ENCODE measurements at regions of chr11 and their contacts with region 1.

Region 1: GRCh38 chr11:95912902-95913560 is 10.9 kb downstream of the MTMR2 start:
- DNase-seq: no peak
- ATAC-seq: no peak
- H3K4me3 ChIP-seq: no peak overlapping the region
- H3K27ac ChIP-seq: no peak overlapping the region
- H3K4me1 ChIP-seq: no peaks in the 10 kb centered on the region
- H3K27me3 ChIP-seq: no peaks in the 10 kb centered on the region
- CTCF ChIP-seq: no peak
- EP300 ChIP-seq: no peak
- POLR2A ChIP-seq: no peak
- RAD21 ChIP-seq: no peak

Region 2: GRCh38 chr11:95531116-95531515 is 381.9 kb before region 1 on chr11:
- CTCF ChIA-PET with region 1: no interaction called
- POLR2A ChIA-PET with region 1: no interaction called
- in situ Hi-C with region 1: no loop called
- intact Hi-C with region 1: no loop called
- DNase-seq: no peak
- ATAC-seq: no peak
- H3K4me3 ChIP-seq: no peak overlapping the region
- H3K27ac ChIP-seq: no peak overlapping the region
- H3K4me1 ChIP-seq: no peaks in the 10 kb centered on the region
- H3K27me3 ChIP-seq: no peaks in the 10 kb centered on the region; a peak in 1 of 5 replicates
- CTCF ChIP-seq: no peak
- EP300 ChIP-seq: no peak
- POLR2A ChIP-seq: no peak
- RAD21 ChIP-seq: no peak

Region 3: DNA sequence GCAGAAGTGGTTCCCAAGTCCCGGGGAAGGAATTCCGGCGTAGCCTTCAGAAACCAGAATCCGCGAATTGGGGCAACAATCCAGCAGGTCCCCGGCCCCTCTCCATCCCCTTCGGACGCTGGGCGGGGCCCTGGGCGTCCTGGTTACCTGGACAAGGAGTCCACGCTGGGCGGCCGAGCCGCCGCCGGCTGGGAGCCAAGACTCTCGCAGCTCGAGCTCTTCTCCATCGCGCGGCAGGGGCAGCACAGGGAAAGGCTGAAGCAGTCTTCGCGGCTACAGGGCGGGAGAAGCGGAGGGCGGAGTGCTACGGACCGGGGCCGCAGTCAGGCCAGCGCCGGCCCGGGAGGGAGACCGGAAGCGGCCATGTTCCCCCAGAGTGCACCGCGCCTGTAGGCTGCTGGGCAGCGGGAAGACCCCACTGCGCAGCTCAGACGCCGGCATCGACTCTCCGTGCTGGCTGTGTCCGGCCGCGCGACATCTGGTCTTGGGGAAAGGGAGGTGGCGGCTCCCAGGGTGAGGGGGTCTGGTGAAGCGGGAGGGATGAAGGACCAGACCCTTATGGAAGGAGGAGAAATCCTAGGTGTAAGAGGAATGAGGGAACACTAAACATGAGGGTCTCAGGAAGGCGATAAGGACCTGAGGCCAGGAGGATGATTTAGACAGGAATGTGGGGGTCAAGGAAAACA is 10.8 kb after region 1 on chr11 and contains the start of gene MTMR2:
- CTCF ChIA-PET with region 1: no interaction called
- POLR2A ChIA-PET with region 1: interaction called, 13 read pairs
- in situ Hi-C with region 1: no loop called
- intact Hi-C with region 1: no loop called
- DNase-seq: peak; percentile 77 to 84 (median 81)
- ATAC-seq: peak; percentile 99
- H3K4me3 ChIP-seq: peak within 1 kb of the TSS; percentile 75
- H3K27ac ChIP-seq: peak within 1 kb of the TSS; percentile 84
- H3K4me1 ChIP-seq: peaks cover 6 to 10% of the 10 kb centered on the region in 2 experiments; a peak in 4 of 5 replicates
- H3K27me3 ChIP-seq: no peaks in the 10 kb centered on the region
- CTCF ChIP-seq: 0 out of 6 replicates have a peak, but pooled peaks of 1 of the 3 experiments have one; percentile 5
- EP300 ChIP-seq: no peak
- POLR2A ChIP-seq: peak; percentile 98
- RAD21 ChIP-seq: 0 out of 4 replicates have a peak, but pooled peaks have one; percentile 7 to 17
- polyA plus RNA-seq, gene MTMR2: 12.6 to 15.8 TPM